ENCODE measurements at regions of chr4 and their contacts with region 1.

Region 1: DNA sequence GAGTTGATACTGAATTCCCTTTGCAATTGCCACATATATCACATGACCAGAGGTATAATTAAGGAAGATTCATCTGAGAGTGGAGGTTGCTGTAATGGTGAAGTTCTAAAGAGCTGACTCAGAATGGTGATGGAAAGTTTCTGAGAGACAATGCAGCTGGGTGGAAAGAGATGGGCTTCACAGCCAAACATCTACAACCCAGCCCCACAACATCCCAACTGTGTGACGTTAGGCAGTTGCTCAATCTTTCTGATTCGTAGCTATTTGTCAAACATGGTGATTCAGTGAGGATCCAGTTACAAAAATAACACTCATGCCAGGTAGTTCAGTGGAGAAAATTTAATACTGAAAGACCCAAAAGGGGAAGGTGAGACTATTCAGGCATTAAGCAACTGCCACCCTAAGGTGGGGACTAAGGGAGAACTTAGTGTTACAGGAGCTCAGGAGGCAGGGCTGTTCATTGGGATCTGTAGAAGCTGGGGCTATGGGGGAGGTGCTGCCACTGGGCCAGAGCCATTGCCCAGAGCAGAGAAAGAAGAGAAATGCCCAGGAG is 6.9 kb upstream of the AFF1 start:
- DNase-seq: no peak
- ATAC-seq: peak; percentile 84
- H3K4me3 ChIP-seq: no peak overlapping the region
- H3K27ac ChIP-seq: peak overlapping the region; percentile 18 to 42
- H3K4me1 ChIP-seq: peaks cover 0 to 33% of the 10 kb centered on the region in 2 donors
- H3K27me3 ChIP-seq: no peaks in the 10 kb centered on the region
- CTCF ChIP-seq: no peak

Region 2: DNA sequence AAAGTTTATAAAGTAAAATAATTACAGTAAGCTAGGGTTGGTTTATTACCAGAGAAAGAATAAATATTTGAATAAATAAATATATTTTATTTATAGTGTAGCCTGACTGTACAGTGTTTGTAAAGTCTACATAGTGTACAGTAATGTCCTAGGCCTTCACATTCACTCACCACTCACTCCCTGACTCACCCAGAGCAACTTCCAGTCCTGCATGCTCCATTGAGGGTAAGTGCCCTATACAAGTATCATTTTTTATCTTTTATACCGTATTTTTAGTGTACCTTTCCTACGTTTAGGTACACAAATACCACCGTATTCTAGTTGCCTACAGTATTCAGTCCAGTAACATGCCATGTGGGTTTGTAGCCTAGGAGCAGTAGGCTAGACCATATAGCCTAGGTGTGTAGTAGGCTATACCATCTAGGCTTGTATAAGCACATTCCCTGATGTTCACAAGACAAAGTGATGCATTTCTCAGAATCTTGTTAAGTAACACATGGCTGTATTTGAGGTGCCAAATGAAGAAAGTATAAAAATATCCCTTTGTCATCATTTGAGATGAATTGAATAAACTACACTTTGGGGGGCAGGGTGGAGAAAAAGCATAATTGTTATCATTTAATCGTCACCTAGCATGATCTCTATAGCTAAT is 307.2 kb after region 1 on chr4:
- intact Hi-C with region 1: loop called in 1 of 2 experiments (anchors 10 kb)
- DNase-seq: no peak
- ATAC-seq: peak; percentile 33
- H3K4me3 ChIP-seq: peak overlapping the region in 1 of 2 donors; percentile 38
- H3K27ac ChIP-seq: no peak overlapping the region
- H3K4me1 ChIP-seq: peaks cover 0 to 4% of the 10 kb centered on the region in 2 donors
- H3K27me3 ChIP-seq: no peaks in the 10 kb centered on the region
- CTCF ChIP-seq: no peak

Measured in left lung (tissue), 14 donors.